GM13977 (cell line): ENCODE measurements at regions of chr2 and their contacts with region 1.

Region 1: GRCh38 chr2:39913648-39914461 is 134.8 kb upstream of the THUMPD2 start:
- DNase-seq: peak; percentile 46
- CTCF ChIP-seq: peak; percentile 87

Region 2: DNA sequence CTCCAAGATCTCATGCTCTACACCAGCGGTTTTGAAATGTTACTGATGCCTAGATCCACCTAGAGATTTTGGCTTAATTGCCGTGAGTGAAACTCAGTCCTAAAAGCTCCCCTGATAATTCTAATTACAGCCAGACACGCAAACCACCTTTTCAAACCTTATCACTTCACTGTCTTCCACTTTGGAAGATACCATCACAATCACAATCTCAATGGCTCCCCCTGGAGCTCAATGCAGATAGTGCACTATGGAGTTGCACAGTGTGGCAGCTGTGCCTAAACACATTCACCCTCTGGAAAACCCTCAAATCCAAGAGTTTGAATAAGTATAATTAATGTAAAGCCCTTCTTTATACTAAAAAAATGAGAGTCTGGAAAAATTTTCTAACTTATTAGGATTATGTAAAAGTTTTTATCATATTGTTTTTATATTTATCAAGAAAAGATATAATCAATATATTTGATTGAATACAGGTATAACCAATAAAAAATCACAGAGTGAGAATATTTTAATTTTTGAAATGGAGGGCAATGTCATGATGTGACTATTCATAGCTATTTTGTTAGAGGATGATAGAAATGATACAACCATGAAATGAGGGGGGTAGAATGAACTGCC is 640.9 kb after region 1 on chr2:
- in situ Hi-C with region 1: loop called (anchors 10 kb)
- DNase-seq: peak; percentile 15
- CTCF ChIP-seq: peak; percentile 89